ENCODE measurements at regions of chr3 and their contacts with region 1.

Region 1: DNA sequence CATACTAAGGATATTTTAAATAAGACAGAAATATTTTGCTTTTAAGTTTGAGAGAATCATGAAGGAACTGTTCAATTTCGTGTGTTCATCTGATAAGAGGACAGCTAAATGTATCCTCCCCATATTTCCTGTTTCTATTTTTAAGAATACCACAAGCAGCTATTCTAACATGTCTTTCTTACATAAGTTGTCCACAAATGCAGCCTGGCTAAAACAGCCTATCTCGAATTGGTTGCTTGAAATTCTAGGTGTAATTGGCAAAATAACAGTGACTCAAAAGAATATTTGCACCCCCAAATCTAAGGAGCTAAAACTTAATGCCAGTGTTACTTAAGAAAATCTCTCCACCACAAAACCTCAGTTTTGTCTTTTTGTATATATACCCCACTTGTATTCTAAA is 35.0 kb downstream of the BTLA start:
- DNase-seq: no peak
- H3K4me3 Mint-ChIP-seq: peak overlapping the region; percentile 38
- H3K27ac Mint-ChIP-seq: no peak overlapping the region
- H3K4me1 Mint-ChIP-seq: peaks cover 65% of the 10 kb centered on the region
- H3K27me3 Mint-ChIP-seq: no peaks in the 10 kb centered on the region

Region 2: DNA sequence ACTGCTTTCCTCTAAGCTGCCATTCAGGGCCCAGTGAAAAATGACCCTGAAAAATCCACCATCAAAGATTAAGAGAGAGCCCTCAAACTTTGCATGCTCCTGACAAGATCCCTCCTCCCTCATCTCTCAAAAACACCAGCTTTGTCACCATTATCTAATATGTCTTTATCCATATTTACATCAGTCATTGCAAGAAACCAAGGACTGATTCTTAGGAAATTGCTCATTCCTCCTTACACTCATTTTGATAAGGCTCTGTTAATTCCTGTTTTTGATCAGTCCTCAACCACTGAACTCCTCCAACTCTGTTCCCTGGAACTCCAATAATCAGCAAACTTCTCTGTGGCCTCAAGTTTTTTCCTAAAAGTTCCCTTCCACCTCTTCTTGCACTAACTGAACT is 79.5 kb before region 1 on chr3:
- intact Hi-C with region 1: loop called (anchors 1 kb)
- DNase-seq: no peak
- H3K4me3 Mint-ChIP-seq: no peak overlapping the region
- H3K27ac Mint-ChIP-seq: peak overlapping the region; percentile 73
- H3K4me1 Mint-ChIP-seq: peaks cover 66% of the 10 kb centered on the region
- H3K27me3 Mint-ChIP-seq: no peaks in the 10 kb centered on the region

Region 3: DNA sequence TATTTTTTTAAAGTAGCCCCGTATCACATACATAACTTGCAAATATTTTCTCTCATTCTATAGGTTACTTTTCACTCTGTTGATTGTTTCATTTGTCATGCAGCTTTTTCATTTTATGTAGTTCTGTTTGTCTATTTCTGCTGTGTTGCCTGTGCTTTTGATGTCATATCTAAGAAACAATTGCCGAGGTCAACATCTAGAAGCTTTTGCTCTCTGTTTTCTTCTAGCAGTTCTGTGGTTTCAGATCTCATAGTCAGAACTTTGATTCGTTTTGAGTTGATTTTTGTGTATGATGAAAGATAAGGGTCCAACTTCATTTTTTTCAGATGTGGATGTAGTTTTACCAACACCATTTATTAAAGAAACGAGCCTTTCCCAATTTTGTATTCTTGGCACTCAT is 51.8 kb before region 1 on chr3:
- intact Hi-C with region 1: loop called (anchors 1 kb)
- DNase-seq: no peak
- H3K4me3 Mint-ChIP-seq: no peak overlapping the region
- H3K27ac Mint-ChIP-seq: no peak overlapping the region
- H3K4me1 Mint-ChIP-seq: peaks cover 23% of the 10 kb centered on the region
- H3K27me3 Mint-ChIP-seq: peaks cover 6% of the 10 kb centered on the region

Region 4: DNA sequence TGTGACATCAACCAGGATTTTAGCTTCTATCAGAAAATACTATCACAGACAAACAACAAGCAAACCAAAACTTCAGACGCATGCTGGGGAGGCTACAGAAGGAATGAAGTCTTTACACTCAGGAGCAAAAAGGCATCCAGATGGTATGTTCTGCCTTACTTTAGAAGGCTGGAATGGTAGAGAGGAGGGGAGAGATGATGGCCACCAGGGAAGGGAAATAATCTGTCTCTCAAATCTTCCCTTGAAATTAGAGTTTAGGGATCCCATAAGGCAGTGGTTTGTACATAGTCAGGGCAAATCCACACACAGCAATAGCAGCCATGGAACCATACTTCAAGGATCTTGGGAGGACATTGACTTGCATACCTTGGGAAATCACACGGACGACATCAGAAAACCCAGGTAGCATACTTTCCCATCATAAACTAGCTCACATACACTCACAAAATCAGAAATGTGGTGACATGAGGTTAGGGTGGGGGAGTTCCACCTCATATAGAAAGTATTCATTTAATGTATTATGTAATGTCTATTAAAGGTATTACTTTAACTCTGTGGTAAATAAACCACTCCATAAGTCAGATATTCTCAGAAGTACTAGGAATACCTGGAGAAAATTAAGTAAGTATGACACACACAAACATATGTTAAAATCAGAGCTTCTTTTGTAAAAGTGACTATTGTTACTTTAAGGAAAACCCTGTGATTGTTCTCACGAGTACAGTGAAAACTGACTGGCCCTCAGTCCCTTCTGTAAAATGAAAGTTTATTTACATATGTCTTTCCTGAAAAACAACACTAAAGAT is 25.6 kb after region 1 on chr3:
- intact Hi-C with region 1: loop called (anchors 1 kb)
- DNase-seq: no peak
- H3K4me3 Mint-ChIP-seq: peak overlapping the region; percentile 70
- H3K27ac Mint-ChIP-seq: peak overlapping the region; percentile 92
- H3K4me1 Mint-ChIP-seq: peaks cover 59% of the 10 kb centered on the region
- H3K27me3 Mint-ChIP-seq: no peaks in the 10 kb centered on the region

Region 5: DNA sequence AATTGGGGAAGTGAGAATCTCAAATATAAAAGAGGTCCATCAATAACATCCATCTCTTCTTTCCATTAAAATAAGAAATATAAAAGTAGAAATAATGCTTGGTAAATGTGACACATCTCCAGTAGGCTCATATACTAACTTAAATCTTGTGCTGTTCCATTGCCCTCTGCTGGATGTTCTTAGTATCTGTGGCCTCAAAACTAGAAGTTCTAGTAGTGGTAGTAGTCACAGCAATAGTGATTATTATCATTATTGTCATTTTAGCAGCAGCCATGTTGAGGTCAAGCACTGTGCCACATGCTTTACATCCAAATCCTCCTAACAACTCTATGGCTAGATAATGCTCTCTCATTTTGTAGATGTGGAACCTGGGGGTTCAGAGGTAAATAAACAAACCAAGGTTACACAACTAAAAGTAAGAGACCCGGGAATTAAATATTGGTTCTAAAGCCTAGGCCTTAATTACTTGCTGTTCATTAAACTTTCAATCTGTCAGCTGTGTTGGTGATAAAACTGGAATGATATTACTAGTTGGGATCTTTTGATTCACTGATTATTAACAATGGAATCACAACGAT is 55.2 kb after region 1 on chr3:
- intact Hi-C with region 1: loop called (anchors 1 kb)
- DNase-seq: no peak
- H3K4me3 Mint-ChIP-seq: no peak overlapping the region
- H3K27ac Mint-ChIP-seq: no peak overlapping the region
- H3K4me1 Mint-ChIP-seq: peaks cover 27% of the 10 kb centered on the region
- H3K27me3 Mint-ChIP-seq: no peaks in the 10 kb centered on the region